IMR-90 (cell line): ENCODE measurements at regions of chr15 and their contacts with region 1.

Region 1: DNA sequence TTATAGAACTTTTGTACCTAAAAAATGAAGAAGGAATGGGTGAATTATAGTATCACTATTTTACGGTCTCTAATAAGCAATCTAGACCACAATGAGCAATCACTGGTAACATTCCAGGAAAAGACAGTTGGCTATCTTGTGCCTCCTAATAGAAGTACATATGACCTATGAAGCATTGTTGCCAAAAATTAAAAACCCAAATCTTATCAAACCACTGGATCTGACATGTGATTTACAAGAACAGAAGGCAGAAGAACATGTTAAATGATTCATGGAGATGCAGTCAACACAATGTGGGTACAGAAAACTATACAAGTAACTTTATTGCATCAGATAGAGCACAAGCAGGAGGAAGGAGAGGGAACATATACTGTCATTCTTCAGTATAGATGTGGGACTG is 14.5 kb upstream of the HYKK start:
- DNase-seq: peak; percentile 16
- ATAC-seq: no peak
- H3K4me3 ChIP-seq: no peak overlapping the region
- H3K27ac ChIP-seq: no peak overlapping the region
- H3K4me1 ChIP-seq: no peaks in the 10 kb centered on the region
- H3K27me3 ChIP-seq: no peaks in the 10 kb centered on the region
- CTCF ChIP-seq: no peak
- POLR2A ChIP-seq: no peak
- RAD21 ChIP-seq: no peak

Region 2: GRCh38 chr15:78461171-78461888 is 31.5 kb before region 1 on chr15:
- CTCF ChIA-PET with region 1: no interaction called
- POLR2A ChIA-PET with region 1: interaction called, 3 read pairs
- dilution Hi-C with region 1: no loop called
- in situ Hi-C with region 1: no loop called
- intact Hi-C with region 1: loop called (anchors 5 kb)
- DNase-seq: no peak
- ATAC-seq: peak; percentile 51
- H3K4me3 ChIP-seq: no peak overlapping the region
- H3K27ac ChIP-seq: no peak overlapping the region
- H3K4me1 ChIP-seq: peaks cover 1% of the 10 kb centered on the region; the same call in 1 of the 2 replicates
- H3K27me3 ChIP-seq: no peaks in the 10 kb centered on the region
- CTCF ChIP-seq: no peak
- POLR2A ChIP-seq: no peak
- RAD21 ChIP-seq: no peak

Region 3: DNA sequence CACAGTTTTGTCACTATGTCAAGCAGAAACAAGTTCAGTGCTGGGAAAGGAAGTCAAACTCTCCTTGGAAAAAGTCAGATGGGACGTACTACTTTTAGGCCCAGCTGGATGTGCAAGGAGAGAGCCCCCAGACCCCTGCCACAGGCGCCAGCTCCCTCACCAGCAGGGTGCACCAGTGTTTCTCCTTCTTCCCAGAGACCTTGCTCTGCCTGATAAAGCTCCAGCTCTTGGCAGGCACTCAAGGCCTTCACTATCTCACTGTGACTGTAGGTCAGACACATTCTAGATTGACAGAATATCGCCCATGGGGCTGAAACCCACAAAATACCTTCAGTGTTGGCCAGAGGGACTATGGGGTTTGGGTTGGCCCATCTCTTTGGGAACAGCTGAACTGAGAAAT is 203.0 kb after region 1 on chr15:
- CTCF ChIA-PET with region 1: no interaction called
- POLR2A ChIA-PET with region 1: no interaction called
- dilution Hi-C with region 1: no loop called
- in situ Hi-C with region 1: no loop called
- intact Hi-C with region 1: no loop called
- DNase-seq: no peak
- ATAC-seq: no peak
- H3K4me3 ChIP-seq: no peak overlapping the region
- H3K27ac ChIP-seq: no peak overlapping the region
- H3K4me1 ChIP-seq: no peaks in the 10 kb centered on the region
- H3K27me3 ChIP-seq: peaks cover 13% of the 10 kb centered on the region
- CTCF ChIP-seq: no peak
- POLR2A ChIP-seq: no peak
- RAD21 ChIP-seq: no peak